ENCODE measurements at regions of chr9 and their contacts with region 1.

Region 1: GRCh38 chr9:87080512-87081264 is 133.4 kb upstream of the GAS1 start:
- DNase-seq: peak in 1 of 3 donors; percentile 22
- ATAC-seq: peak; percentile 46 to 77
- H3K4me3 ChIP-seq: no peak overlapping the region
- H3K27ac ChIP-seq: no peak overlapping the region
- H3K4me1 ChIP-seq: peaks cover 3% of the 10 kb centered on the region
- H3K27me3 ChIP-seq: no peaks in the 10 kb centered on the region

Region 2: DNA sequence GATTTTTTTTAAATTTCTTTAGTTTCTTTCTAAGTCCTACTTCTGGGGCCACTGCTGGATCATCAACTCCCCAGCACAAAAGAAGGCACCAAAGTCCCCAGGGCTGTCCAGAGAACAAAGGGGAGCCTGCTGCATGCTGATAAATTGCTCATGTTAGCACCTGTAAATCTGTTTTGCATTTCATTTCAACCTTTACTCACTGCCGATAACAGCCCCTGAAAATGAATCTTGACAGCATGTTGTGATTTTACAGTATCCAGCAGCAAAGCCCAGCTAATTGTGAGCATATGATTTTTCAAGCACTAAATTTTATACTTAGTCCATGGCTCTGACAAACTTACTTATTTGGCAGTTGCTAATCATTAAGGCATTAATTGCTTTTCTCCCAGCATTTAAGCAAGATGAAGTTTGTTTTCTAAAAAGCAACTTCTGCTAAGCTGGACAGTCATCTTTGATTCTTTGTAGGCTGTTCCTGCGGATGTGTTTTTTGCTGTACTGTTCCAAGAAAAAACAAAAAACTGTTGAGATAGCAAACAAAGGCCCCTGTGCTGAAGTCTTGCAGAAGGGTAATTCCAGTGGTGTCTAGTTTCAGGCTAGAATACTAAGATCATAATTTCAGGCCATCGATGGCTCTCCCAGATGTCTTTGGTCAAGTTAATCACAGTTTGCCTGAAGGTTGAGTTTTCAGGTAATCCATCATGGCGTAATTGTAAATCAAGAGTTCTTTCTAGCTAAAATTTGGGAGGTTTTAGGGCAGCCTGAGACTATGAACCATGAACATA is 60.3 kb before region 1 on chr9:
- intact Hi-C with region 1: no loop called
- DNase-seq: no peak
- ATAC-seq: no peak
- H3K4me3 ChIP-seq: no peak overlapping the region
- H3K27ac ChIP-seq: no peak overlapping the region
- H3K4me1 ChIP-seq: no peaks in the 10 kb centered on the region
- H3K27me3 ChIP-seq: no peaks in the 10 kb centered on the region

Region 3: DNA sequence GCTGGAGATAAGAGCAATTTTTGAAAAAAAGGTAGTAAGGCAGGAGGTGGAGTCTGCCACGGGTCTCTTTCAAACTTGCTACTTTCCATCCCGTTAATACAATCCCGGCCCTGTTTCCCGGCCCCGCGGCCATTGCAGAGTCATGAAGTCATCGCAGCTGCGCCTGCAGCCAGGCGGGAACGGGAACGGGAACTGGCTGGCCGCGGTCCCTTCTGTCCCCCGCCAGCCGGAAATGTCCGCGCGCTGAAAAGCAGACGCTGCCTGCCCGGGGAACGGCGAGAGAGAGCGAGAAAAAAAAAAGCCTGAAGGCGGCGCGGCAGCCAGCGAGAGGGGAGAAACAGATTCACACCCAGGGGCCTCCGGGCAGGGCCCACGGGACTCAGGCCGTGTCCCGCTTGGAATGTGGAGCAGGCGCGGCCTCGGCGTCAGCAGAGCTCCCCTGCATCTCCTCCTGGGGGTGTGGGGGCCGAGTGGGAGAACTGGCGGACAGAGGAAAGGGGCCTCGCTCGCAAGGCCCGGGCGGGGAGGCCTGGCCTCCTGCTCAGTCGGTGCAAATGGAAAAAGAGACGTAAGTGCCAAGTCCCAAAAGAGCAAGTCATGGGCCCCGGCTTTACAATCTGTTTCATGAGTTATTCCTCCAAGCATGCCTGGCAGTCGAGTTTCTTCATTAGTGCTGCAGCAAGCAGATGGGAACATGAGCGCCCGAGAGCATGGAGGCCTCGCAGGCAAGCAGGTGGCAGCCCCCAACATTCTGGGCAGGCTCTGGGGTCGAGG is 67.8 kb after region 1 on chr9:
- intact Hi-C with region 1: loop called in 1 of 4 experiments (anchors 10 kb)
- DNase-seq: peak; percentile 92 to 96 (median 96)
- ATAC-seq: peak; percentile 95 to 97
- H3K4me3 ChIP-seq: peak overlapping the region; percentile 43
- H3K27ac ChIP-seq: peak overlapping the region; percentile 89
- H3K4me1 ChIP-seq: peaks cover 3% of the 10 kb centered on the region
- H3K27me3 ChIP-seq: no peaks in the 10 kb centered on the region

Measured in right cardiac atrium (tissue), 5 donors.